Tibial artery (tissue), 4 donors: ENCODE measurements at regions of chr18 and their contacts with region 1.

Region 1: DNA sequence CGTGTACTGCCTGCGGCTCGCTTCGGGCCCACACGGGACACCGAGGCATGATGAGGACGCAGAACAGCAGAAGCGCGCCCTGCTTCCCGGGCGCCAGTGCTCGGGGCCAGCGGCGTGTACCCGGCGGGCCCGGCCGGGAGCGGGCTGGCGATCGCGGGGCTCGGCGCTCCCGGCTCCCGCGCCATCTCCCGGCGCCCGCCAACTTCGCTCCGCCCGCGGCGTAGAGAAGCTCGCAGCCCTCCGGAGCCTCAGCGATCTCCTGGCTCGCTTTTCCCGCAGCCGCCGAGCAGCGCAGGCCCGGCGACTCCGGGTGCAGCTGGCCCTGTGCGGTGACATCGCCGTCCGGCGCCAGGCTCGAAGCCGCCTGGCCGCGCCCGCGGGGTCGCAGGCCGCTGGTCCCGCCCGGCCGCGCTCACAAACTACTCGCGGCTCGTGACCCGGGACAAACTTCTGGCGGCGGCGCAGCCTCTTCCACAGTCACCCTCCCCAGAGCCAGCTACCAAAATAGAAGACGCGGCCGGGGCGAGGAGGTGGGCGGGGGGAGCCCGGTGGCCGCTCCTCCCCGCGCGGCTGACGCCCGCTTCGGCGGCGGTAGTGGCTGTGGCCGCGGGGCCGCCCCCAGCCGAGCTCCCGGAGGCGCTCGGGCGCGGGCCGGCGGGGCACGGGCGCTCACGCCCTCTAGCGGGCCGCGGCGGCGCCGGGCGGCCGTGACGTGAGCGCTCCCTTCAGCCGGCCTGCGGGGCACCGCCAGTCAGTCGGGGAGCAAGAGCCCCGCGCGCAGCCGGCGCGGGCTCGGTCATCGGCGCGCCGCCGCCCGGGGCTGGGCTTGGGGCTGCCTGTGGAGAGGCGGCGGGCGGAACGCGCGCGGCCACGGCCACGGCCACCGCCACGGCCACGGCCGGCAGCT is at the start of gene PTPRM:
- DNase-seq: peak; percentile 95 to 97
- H3K4me3 ChIP-seq: peak within 1 kb of the TSS; percentile 81 to 83
- H3K27ac ChIP-seq: peak within 1 kb of the TSS; percentile 94 to 99
- H3K4me1 ChIP-seq: peaks cover 0 to 31% (median 11%) of the 10 kb centered on the region in 4 donors
- H3K27me3 ChIP-seq: no peaks in the 10 kb centered on the region
- CTCF ChIP-seq: peak; percentile 5 to 90

Region 2: GRCh38 chr18:7272311-7273049 is 294.3 kb before region 1 on chr18:
- intact Hi-C with region 1: loop called (anchors 10 kb)
- DNase-seq: peak; percentile 61 to 80
- H3K4me3 ChIP-seq: peak overlapping the region in 1 of 2 donors; percentile 32
- H3K27ac ChIP-seq: peak overlapping the region; percentile 49 to 52
- H3K4me1 ChIP-seq: peaks cover 0 to 17% (median 7%) of the 10 kb centered on the region in 4 donors
- H3K27me3 ChIP-seq: no peaks in the 10 kb centered on the region
- CTCF ChIP-seq: peak; percentile 34 to 56

Region 3: GRCh38 chr18:7524786-7525185 is 42.0 kb before region 1 on chr18:
- intact Hi-C with region 1: no loop called
- DNase-seq: no peak
- H3K4me3 ChIP-seq: no peak overlapping the region
- H3K27ac ChIP-seq: no peak overlapping the region
- H3K4me1 ChIP-seq: no peaks in the 10 kb centered on the region
- H3K27me3 ChIP-seq: no peaks in the 10 kb centered on the region
- CTCF ChIP-seq: no peak

Region 4: GRCh38 chr18:7608781-7609201 is 42.0 kb after region 1 on chr18:
- intact Hi-C with region 1: loop called (anchors 5 kb)
- DNase-seq: no peak
- H3K4me3 ChIP-seq: no peak overlapping the region
- H3K27ac ChIP-seq: peak overlapping the region; percentile 60 to 72
- H3K4me1 ChIP-seq: peaks cover 0 to 36% (median 26%) of the 10 kb centered on the region in 4 donors
- H3K27me3 ChIP-seq: no peaks in the 10 kb centered on the region
- CTCF ChIP-seq: no peak